ENCODE measurements at regions of chr4 and their contacts with region 1.

Region 1: DNA sequence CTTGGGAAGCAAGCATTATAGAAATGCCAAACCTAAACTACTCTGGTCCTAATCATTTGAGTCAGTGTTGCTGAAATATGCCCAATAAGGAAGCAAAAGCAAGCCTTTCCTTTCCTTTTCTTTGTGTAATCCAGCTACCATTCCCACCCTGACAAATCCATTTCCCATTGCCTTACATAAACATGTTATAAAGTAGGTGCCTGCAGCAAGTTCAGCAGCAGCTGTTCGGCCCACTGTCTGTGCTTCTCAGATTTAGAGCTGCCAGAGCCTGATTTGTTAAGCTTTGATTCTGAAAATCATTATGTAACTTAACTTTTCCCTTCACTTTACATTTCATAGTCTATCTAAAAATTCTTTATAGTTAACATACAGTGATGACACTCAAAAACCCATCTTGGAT is 148.6 kb downstream of the EPHA5 start:
- DNase-seq: no peak
- H3K4me3 Mint-ChIP-seq: no peak overlapping the region
- H3K27ac Mint-ChIP-seq: no peak overlapping the region
- H3K4me1 Mint-ChIP-seq: no peaks in the 10 kb centered on the region
- H3K27me3 Mint-ChIP-seq: no peaks in the 10 kb centered on the region

Region 2: GRCh38 chr4:65538571-65538970 is 16.9 kb after region 1 on chr4:
- intact Hi-C with region 1: loop called (anchors 1 kb)
- DNase-seq: no peak
- H3K4me3 Mint-ChIP-seq: no peak overlapping the region
- H3K27ac Mint-ChIP-seq: no peak overlapping the region
- H3K4me1 Mint-ChIP-seq: no peaks in the 10 kb centered on the region
- H3K27me3 Mint-ChIP-seq: no peaks in the 10 kb centered on the region

Measured in activated T-helper 2 cell treated with anti-CD3 and anti-CD28 coated beads, Interferon-gamma antibody, Interleukin-2, Interleukin-4, amounts not matched to agents 10 μg/mL and 5 μg/mL and 100 μg/mL, durations not matched to agents 14 hours and 24 hours and 36 hours (primary cell).